ENCODE measurements at regions of chr6 and their contacts with region 1.

Region 1: GRCh38 chr6:108558372-108559096 is 2.2 kb upstream of the FOXO3 start:
- DNase-seq: peak; percentile 98 to 99 (median 99)
- H3K4me3 ChIP-seq: peak overlapping the region; percentile 69 to 100 (median 98)
- H3K4me3 Mint-ChIP-seq: peak overlapping the region; percentile 90 to 95
- H3K27ac ChIP-seq: peak overlapping the region; percentile 97
- H3K27ac Mint-ChIP-seq: peak overlapping the region; percentile 95 to 98 (median 97)
- H3K4me1 ChIP-seq: peaks cover 21 to 32% of the 10 kb centered on the region in 2 donors
- H3K4me1 Mint-ChIP-seq: peaks cover 23% of the 10 kb centered on the region
- H3K27me3 ChIP-seq: no peaks in the 10 kb centered on the region
- H3K27me3 Mint-ChIP-seq: peaks cover 3 to 8% (median 6%) of the 10 kb centered on the region in 3 donors
- CTCF ChIP-seq: no peak

Region 2: DNA sequence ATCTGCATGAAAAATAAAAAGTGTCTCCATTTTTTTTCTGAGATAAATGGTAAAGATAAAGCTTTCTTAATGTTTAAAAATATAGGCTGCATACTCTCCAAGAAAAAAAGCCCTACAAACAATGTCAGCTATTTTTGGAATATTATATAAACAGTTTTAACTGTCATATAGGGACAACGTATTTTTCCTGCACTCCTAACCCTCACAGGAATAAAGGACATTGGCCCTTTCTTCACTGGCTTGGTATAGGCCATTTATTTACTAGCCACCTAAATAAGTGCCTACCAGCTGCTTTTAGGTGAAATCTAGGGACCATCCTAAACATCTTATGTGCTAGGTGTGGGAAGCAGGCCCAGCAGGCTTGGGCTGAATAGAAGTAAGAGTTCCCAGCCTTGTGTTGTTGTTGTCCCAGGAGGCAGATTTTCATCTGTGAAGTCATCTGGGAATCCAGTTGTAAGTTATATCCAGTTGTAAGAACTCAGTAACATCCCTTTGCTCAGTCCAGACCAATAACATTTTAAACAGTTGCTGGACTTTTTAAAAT is 23.5 kb after region 1 on chr6:
- intact Hi-C with region 1: no loop called
- DNase-seq: no peak
- H3K4me3 ChIP-seq: peak overlapping the region in 1 of 3 experiments; percentile 46
- H3K4me3 Mint-ChIP-seq: no peak overlapping the region
- H3K27ac ChIP-seq: peak overlapping the region in 1 of 2 donors; percentile 71
- H3K27ac Mint-ChIP-seq: peak overlapping the region; percentile 84 to 94 (median 89)
- H3K4me1 ChIP-seq: peaks cover 30 to 35% of the 10 kb centered on the region in 2 donors
- H3K4me1 Mint-ChIP-seq: peaks cover 74% of the 10 kb centered on the region
- H3K27me3 ChIP-seq: no peaks in the 10 kb centered on the region
- H3K27me3 Mint-ChIP-seq: peaks cover 0 to 3% (median 3%) of the 10 kb centered on the region in 3 donors
- CTCF ChIP-seq: no peak

Region 3: GRCh38 chr6:108592371-108593337 is 34.1 kb after region 1 on chr6:
- intact Hi-C with region 1: loop called in 1 of 2 experiments (anchors 5 kb)
- DNase-seq: peak in 2 of 3 donors; percentile 41 to 68
- H3K4me3 ChIP-seq: no peak overlapping the region
- H3K4me3 Mint-ChIP-seq: peak overlapping the region in 1 of 2 donors; percentile 26
- H3K27ac ChIP-seq: no peak overlapping the region
- H3K27ac Mint-ChIP-seq: peak overlapping the region in 6 of 7 donors; percentile 13 to 82 (median 53)
- H3K4me1 ChIP-seq: peaks cover 64 to 82% of the 10 kb centered on the region in 2 donors
- H3K4me1 Mint-ChIP-seq: peaks cover 86% of the 10 kb centered on the region
- H3K27me3 ChIP-seq: no peaks in the 10 kb centered on the region
- H3K27me3 Mint-ChIP-seq: peaks cover 0 to 2% (median 0%) of the 10 kb centered on the region in 3 donors
- CTCF ChIP-seq: no peak

Region 4: DNA sequence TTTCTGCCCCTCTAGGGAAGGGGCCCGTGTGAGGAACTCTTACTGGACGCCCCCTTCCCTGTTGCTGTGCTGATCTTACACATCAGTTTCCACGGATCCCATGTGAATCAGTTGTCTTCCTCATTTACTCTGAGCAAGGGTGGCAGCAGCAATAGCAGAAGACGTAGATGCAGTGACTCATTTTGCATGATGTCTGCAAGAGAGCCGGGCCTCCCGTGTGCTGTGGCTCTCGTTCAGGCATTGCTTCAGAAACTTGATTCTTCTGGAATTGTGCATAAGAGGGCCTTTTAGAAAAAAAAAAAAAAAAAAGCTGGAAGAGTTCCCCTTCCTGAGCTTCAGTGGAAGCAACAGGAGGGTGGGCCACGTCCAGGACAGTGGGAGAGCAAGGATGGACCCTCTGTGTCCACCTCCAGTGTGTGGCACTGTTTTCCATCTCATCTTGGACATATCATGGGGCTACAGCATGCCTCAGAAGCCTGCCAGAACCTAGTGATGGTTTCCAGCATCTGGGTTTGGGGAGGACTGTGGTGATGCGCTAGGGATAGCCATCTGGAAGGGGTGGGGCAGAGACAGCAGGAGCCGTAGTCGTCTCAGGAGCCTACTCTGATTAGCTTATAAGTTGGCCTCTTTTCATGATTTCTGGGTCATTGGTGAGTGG is 64.2 kb after region 1 on chr6:
- intact Hi-C with region 1: loop called (anchors 2 to 10 kb)
- DNase-seq: peak; percentile 92 to 97 (median 95)
- H3K4me3 ChIP-seq: peak overlapping the region in 2 of 3 experiments; percentile 23 to 50
- H3K4me3 Mint-ChIP-seq: peak overlapping the region; percentile 53 to 85
- H3K27ac ChIP-seq: peak overlapping the region; percentile 74 to 89
- H3K27ac Mint-ChIP-seq: peak overlapping the region; percentile 97 to 100 (median 99)
- H3K4me1 ChIP-seq: peaks cover 42 to 64% of the 10 kb centered on the region in 2 donors
- H3K4me1 Mint-ChIP-seq: peaks cover 71% of the 10 kb centered on the region
- H3K27me3 ChIP-seq: no peaks in the 10 kb centered on the region
- H3K27me3 Mint-ChIP-seq: peaks cover 0 to 4% (median 0%) of the 10 kb centered on the region in 3 donors
- CTCF ChIP-seq: no peak

Region 5: GRCh38 chr6:108835218-108835850 is 276.8 kb after region 1 on chr6:
- intact Hi-C with region 1: loop called in 1 of 2 experiments (anchors 5 kb)
- DNase-seq: peak; percentile 81 to 85 (median 83)
- H3K4me3 ChIP-seq: no peak overlapping the region
- H3K4me3 Mint-ChIP-seq: peak overlapping the region in 1 of 2 donors; percentile 89
- H3K27ac ChIP-seq: no peak overlapping the region
- H3K27ac Mint-ChIP-seq: peak overlapping the region in 3 of 7 donors; percentile 58 to 65 (median 62)
- H3K4me1 ChIP-seq: peaks cover 23 to 31% of the 10 kb centered on the region in 2 donors
- H3K4me1 Mint-ChIP-seq: peaks cover 39% of the 10 kb centered on the region
- H3K27me3 ChIP-seq: peaks cover 0 to 18% of the 10 kb centered on the region in 2 donors
- H3K27me3 Mint-ChIP-seq: peaks cover 23 to 34% (median 26%) of the 10 kb centered on the region in 3 donors
- CTCF ChIP-seq: peak; percentile 94

Region 6: DNA sequence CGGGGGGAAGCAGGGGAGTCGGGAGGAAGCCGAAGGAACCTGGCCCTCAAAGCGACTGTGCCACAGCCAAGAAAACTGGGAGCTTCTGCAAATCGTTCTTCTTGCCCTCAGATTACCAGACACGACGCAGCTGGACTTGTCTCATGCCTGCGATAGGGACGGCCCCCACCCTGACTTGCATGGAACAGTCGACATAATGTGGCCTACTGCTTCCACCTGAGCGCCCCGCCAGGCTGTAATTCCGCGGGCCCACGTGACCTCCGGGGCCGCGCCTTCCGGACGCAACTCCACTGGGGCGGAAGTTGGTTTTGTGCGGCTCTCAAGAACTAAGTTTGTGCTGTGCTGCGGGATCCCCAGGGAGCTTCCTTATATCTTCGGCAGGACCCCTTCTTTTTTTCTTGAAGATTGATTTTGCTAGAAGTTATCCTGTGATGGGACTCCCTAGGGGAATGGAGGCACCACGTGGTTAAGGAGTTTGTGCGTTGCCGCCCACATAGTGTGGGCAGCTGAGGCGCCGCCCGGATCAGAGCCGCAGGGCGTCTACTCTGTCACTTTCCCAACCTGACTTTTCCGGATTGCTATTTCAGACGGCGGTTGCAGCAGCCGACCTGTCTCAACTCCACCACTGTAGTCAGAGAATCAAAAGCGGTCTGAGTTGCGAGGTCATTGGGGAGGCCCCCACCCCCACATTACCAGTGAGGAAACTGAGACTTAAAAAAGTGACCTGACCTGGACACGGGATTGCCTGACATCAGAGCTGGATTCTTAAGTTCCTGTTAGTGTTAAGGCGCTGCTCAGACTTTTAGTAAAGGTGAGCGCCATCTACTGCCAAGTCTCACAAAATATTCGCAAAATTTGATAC is 824.3 kb after region 1 on chr6:
- intact Hi-C with region 1: loop called (anchors 2 to 5 kb)
- DNase-seq: peak; percentile 91 to 96 (median 94)
- H3K4me3 ChIP-seq: peak overlapping the region; percentile 75 to 99 (median 88)
- H3K4me3 Mint-ChIP-seq: peak overlapping the region; percentile 91 to 95
- H3K27ac ChIP-seq: peak overlapping the region; percentile 99 to 100
- H3K27ac Mint-ChIP-seq: peak overlapping the region; percentile 99 to 100 (median 100)
- H3K4me1 ChIP-seq: peaks cover 44 to 50% of the 10 kb centered on the region in 2 donors
- H3K4me1 Mint-ChIP-seq: peaks cover 53% of the 10 kb centered on the region
- H3K27me3 ChIP-seq: no peaks in the 10 kb centered on the region
- H3K27me3 Mint-ChIP-seq: no peaks in the 10 kb centered on the region
- CTCF ChIP-seq: no peak

Measured in CD14-positive monocyte (primary cell).